HepG2 (cell line): ENCODE measurements at regions of chr1 and their contacts with region 1.

Region 1: GRCh38 chr1:84753516-84754385 is 63.5 kb upstream of the SSX2IP start:
- DNase-seq: peak; percentile 31
- ATAC-seq: peak; percentile 93
- H3K4me3 ChIP-seq: no peak overlapping the region
- H3K27ac ChIP-seq: no peak overlapping the region
- H3K4me1 ChIP-seq: no peaks in the 10 kb centered on the region
- H3K27me3 ChIP-seq: no peaks in the 10 kb centered on the region
- CTCF ChIP-seq: peak; percentile 93
- EP300 ChIP-seq: no peak
- POLR2A ChIP-seq: no peak
- RAD21 ChIP-seq: peak; percentile 89

Region 2: GRCh38 chr1:84143796-84144565 is 609.8 kb before region 1 on chr1 and contains the start of gene PRKACB:
- CTCF ChIA-PET with region 1: no interaction called
- POLR2A ChIA-PET with region 1: no interaction called
- in situ Hi-C with region 1: loop called (anchors 25 kb)
- intact Hi-C with region 1: no loop called
- DNase-seq: no peak
- ATAC-seq: no peak
- H3K4me3 ChIP-seq: no peak within 1 kb of the TSS
- H3K27ac ChIP-seq: no peak within 1 kb of the TSS
- H3K4me1 ChIP-seq: no peaks in the 10 kb centered on the region
- H3K27me3 ChIP-seq: no peaks in the 10 kb centered on the region
- CTCF ChIP-seq: no peak
- EP300 ChIP-seq: no peak
- POLR2A ChIP-seq: no peak
- RAD21 ChIP-seq: no peak
- total RNA-seq, gene PRKACB: 5.8 and 7.7 TPM in 2 replicates

Region 3: DNA sequence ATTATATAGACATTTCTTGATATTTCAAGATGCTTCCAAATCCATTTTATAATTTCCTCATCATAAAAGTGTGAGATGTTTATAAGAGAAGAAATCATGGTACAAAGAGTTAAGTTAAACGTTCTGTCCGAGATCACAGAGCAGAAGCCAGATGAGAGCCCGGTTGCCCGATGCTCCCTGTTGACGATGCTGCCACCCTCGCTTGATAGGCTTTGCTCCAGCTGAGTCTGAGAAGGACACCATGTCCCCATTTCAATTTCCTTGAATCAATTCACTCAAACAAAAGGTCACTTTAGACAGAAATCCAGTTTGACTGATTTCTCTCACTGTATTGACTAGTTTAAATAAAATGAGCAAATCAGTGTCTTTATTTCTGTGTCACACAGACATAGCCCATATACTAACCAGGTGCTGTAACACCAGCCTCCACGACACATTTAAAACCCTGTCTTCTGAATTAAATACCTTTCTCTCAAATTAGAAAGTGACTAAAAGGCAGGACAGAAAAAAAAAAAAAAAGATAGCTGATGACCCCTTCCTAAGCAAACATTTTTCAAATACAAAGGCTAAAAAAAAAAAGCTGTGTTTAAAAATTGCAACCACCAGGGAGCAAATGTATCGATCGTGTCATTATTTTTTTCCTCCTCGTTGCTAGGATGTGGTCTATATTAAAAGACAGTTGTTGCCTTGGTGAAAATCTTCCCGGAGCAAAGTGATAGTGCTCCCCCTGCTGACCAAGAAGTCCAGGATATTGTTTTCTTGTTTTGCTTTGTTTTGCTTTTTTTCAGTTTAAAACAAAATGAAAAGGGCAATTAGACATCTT is 320.3 kb before region 1 on chr1:
- CTCF ChIA-PET with region 1: no interaction called
- POLR2A ChIA-PET with region 1: no interaction called
- in situ Hi-C with region 1: no loop called
- intact Hi-C with region 1: loop called (anchors 1 kb)
- DNase-seq: peak; percentile 30
- ATAC-seq: peak; percentile 61
- H3K4me3 ChIP-seq: no peak overlapping the region
- H3K27ac ChIP-seq: no peak overlapping the region
- H3K4me1 ChIP-seq: no peaks in the 10 kb centered on the region
- H3K27me3 ChIP-seq: no peaks in the 10 kb centered on the region
- CTCF ChIP-seq: peak; percentile 59
- EP300 ChIP-seq: no peak
- POLR2A ChIP-seq: no peak
- RAD21 ChIP-seq: no peak

Region 4: DNA sequence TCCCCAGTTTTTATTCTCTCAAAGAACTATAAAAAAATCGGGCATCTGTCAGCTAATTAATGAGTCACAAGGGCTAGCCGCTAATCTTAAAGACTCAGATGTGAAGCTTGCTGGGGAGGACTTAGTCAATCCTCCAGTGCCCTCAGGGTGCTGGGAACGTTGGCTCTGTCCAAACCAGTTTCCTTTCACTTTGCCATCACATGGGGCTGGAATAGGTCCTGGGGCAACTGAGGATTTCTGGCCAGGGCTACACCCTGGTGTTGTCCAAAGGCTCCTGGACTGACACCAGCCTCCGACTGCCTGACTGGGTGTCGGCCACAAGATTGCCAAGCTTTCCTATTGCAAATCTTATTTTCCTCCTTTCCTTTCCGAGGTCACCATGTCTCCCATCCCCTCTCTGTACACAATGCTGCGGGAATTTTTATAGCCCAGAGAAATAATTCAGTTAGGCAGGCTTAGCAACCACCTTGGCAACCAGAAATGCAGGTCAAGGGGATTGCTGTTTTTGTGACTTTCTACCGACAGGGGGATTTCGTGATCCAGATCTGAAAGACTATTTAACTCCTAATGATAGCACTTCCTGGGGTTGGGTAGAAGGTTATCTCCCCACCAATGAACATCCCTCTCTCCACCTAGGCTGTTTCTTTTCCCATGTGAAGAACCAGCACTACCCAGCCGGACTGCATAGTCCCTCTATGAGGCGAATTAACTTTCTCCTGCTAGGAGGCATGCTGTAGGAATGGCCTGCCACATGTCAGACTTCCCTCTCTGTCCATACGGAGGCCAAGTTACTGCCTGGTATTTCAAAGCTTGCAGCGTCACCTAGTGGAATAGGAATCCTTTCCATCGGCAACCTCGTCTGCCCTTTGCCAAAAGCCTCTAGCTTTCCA is 149.6 kb before region 1 on chr1:
- CTCF ChIA-PET with region 1: interaction called, 12 read pairs
- POLR2A ChIA-PET with region 1: no interaction called
- in situ Hi-C with region 1: no loop called
- intact Hi-C with region 1: loop called (anchors 1 kb)
- DNase-seq: peak; percentile 85
- ATAC-seq: peak; percentile 97
- H3K4me3 ChIP-seq: peak overlapping the region; percentile 5 to 59 (median 45); a peak in 4 of 6 replicates
- H3K27ac ChIP-seq: no peak overlapping the region
- H3K4me1 ChIP-seq: peaks cover 17% of the 10 kb centered on the region; the same call in 1 of the 2 replicates
- H3K27me3 ChIP-seq: peaks cover 0 to 6% of the 10 kb centered on the region in 2 experiments; a peak in 3 of 5 replicates
- CTCF ChIP-seq: peak; percentile 93
- EP300 ChIP-seq: no peak
- POLR2A ChIP-seq: no peak
- RAD21 ChIP-seq: peak; percentile 89

Region 5: DNA sequence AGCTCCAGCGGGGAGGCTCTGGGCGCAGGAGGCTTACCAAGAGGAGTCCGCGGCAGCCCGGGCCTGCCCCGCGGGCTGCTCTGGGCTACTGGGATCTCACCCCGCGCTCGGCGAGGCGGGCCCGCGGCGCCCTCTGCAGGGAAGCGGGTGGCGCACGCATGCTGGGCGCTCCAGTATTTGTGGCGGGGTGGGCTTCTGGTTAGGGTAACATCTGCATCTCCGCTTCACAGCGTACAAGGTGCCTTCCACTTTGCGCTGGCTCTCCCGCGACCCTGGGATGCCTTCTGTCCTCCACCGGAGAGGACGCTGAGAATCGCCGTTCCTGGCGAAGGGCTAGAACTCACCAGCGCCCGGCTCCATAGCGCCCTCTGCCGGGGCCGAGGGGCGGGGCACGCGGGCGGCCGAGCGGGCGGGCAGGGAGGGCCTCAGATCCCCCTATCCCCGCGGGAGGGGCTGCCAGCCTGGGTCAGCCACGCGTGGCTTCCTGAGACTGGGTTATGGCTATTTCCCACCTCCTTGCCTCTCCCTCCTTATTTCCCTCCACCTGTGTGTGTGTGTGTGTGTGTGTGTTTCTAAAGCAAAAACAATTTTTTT is 132.9 kb before region 1 on chr1:
- CTCF ChIA-PET with region 1: no interaction called
- POLR2A ChIA-PET with region 1: no interaction called
- in situ Hi-C with region 1: no loop called
- intact Hi-C with region 1: loop called (anchors 1 kb)
- DNase-seq: peak; percentile 41
- ATAC-seq: peak; percentile 95
- H3K4me3 ChIP-seq: peak overlapping the region; percentile 54 to 83 (median 60)
- H3K27ac ChIP-seq: no peak overlapping the region
- H3K4me1 ChIP-seq: peaks cover 19% of the 10 kb centered on the region
- H3K27me3 ChIP-seq: peaks cover 2 to 3% of the 10 kb centered on the region in 2 experiments; a peak in 2 of 5 replicates
- CTCF ChIP-seq: peak; percentile 89
- EP300 ChIP-seq: no peak
- POLR2A ChIP-seq: no peak
- RAD21 ChIP-seq: peak; percentile 77

Region 6: DNA sequence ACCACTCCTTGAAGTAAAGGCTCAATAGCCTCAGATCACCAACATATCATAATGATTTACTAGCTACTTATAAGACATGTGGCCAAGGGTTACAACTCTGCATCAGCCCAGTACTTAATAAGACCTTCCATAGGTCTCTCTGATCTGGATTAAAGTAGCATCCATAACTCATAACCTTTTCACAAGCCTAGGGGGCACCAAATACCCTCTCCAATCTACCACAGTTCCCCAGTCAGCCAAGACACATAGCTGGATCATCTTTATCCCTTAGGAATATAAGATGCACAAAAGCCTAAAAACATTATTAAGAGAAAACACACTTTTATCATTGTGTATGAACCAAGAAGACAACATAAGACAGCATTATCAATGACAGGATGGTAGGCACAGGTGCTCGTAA is 85.6 kb before region 1 on chr1:
- CTCF ChIA-PET with region 1: interaction called, 14 read pairs
- POLR2A ChIA-PET with region 1: no interaction called
- in situ Hi-C with region 1: loop called (anchors 10 kb)
- intact Hi-C with region 1: loop called (anchors 1 kb)
- DNase-seq: peak; percentile 13
- ATAC-seq: peak; percentile 89
- H3K4me3 ChIP-seq: no peak overlapping the region
- H3K27ac ChIP-seq: no peak overlapping the region
- H3K4me1 ChIP-seq: no peaks in the 10 kb centered on the region
- H3K27me3 ChIP-seq: no peaks in the 10 kb centered on the region
- CTCF ChIP-seq: peak; percentile 46
- EP300 ChIP-seq: no peak
- POLR2A ChIP-seq: no peak
- RAD21 ChIP-seq: no peak

Region 7: DNA sequence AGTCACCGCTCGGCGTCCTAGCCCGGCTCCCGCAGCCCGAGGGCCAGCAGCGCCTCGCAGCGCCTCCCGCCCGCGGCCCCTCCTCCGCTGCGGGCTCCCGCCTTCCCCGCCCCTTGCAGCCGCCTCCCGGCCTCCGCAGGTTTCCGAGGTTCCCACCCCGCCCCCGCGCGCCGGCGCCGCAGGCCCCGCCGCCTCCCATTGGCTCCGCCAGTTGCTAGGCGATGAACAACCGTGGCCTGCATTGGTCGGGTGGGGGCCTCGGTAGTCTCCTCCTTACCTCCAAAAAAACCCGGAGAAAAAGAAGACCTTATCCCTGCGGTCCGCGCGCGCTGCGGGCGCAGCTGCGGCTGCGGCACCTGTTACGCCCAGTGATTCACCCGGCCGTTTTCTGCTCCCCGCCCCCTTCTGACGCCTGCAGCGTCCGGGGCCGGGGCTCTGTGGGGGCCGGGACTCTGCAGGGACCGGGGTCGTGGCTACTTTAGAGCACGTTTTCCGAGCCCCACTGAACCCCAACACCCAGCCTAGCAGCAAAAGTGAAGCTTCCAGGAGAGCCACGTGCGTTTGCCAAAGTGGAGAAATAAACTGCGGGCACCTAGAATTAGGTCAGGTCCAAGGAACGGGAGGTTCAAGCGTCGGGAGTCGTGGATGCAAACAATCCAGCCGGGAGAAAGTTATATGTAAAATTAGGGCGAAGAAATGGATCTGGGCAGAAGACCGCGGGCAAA is 63.2 kb before region 1 on chr1 and contains the start of gene SSX2IP:
- CTCF ChIA-PET with region 1: no interaction called
- POLR2A ChIA-PET with region 1: no interaction called
- in situ Hi-C with region 1: no loop called
- intact Hi-C with region 1: loop called (anchors 1 kb)
- DNase-seq: peak; percentile 92
- ATAC-seq: peak; percentile 91
- H3K4me3 ChIP-seq: peak within 1 kb of the TSS; percentile 85 to 90 (median 87)
- H3K27ac ChIP-seq: peak within 1 kb of the TSS; percentile 78
- H3K4me1 ChIP-seq: peaks cover 40% of the 10 kb centered on the region
- H3K27me3 ChIP-seq: no peaks in the 10 kb centered on the region
- CTCF ChIP-seq: no peak; the same call in 1 of the 2 replicates
- EP300 ChIP-seq: 0 out of 4 replicates have a peak, but pooled peaks of 1 of the 2 experiments have one; percentile 26
- POLR2A ChIP-seq: peak; percentile 51 to 59
- RAD21 ChIP-seq: no peak
- total RNA-seq, gene SSX2IP: 23.7 and 38.8 TPM in 2 replicates

Region 8: DNA sequence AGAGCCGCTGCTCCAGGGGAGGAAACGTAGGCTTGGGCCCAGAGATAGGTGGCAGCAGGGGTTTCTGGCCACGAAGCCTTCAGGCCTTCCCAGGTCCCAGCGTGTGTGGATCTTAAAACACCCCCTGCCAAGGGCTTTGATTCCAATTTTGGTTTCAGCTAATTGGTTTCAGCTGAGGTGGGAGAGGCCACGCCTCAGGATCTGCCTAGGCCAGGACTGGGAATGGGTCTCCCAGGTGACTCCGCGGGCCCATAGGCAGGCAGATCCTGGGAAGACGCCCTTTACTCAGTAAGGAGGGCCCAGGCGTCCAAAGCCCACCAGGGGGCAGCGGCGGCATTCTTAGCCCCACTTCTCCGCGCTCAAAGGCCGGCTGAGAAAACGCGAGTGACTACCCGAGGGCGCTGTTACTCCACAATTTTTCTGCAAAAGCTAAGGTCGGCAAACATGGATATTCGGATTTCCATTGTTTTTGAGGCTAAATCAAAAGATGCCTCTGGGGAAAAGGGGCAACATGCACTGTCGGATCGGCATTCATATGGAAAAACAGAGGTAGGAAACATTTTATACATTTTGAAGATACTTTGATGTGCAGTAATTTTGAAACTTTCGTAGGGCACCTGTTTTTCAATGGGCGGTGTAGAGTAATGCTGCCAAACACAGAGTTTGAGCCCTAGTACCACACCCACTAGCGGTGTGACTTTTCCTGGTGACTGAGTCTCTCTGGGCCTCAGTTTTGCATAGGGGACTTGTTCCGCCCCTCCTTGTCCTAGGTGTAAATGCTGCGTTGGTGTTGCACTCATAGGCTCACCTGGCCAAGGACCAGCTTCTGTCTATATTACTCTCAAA is 554.5 kb after region 1 on chr1:
- CTCF ChIA-PET with region 1: no interaction called
- POLR2A ChIA-PET with region 1: no interaction called
- in situ Hi-C with region 1: no loop called
- intact Hi-C with region 1: no loop called
- DNase-seq: peak; percentile 70
- ATAC-seq: peak; percentile 97
- H3K4me3 ChIP-seq: peak overlapping the region in 2 of 3 experiments; percentile 29; a peak in 2 of 6 replicates
- H3K27ac ChIP-seq: no peak overlapping the region
- H3K4me1 ChIP-seq: peaks cover 15% of the 10 kb centered on the region
- H3K27me3 ChIP-seq: 0 out of 5 replicates have a peak, but pooled peaks cover 0 to 4% of the 10 kb centered on the region in 2 experiments
- CTCF ChIP-seq: peak; percentile 98
- EP300 ChIP-seq: no peak
- POLR2A ChIP-seq: no peak
- RAD21 ChIP-seq: peak; percentile 98